ENCODE measurements at regions of chr19 and their contacts with region 1.

Region 1: DNA sequence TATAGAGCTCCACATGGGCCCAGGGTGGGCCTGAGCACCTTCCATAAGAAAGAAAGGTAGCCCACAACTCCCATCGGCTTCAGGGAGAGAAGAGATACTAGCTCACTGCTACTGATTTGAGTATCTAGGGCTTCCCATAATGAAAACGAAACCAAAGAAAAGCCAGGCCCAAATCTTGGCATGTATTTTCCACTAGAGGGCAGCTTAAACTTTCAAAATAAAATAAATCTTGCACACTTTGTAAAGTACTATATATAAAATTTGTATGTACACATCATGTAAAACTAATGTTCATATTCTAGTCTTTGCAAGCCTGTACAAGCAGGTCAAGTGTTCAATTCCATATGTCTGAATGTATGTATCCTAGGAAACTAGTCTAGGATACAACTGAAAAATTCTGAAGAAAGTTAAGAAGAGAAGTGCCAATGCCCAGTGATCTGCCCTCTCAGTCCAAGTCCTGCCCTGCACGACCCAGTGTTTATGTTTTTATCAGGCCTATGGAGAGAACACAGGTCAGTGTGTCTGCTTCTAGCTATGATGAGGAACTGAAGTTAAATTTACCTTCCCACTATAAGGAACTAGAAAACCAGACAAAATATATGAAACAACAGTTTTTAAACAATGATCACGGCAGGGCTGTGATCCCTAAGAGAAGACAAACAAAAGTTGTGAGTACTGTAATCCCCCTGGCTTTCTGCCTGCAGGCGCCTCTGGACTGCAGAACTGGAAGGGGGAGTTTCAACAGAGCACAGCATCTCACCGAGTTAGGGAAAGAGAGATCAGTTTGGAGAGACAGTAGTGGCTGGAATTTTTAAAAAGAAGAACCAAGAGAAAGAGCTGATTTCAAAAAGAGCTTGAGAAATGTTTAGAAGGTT is 475.7 kb downstream of the UQCRFS1 start:
- DNase-seq: peak; percentile 35
- ATAC-seq: peak; percentile 42
- H3K4me3 Mint-ChIP-seq: no peak overlapping the region
- H3K27ac Mint-ChIP-seq: peak overlapping the region; percentile 56
- H3K4me1 Mint-ChIP-seq: peaks cover 5% of the 10 kb centered on the region
- H3K27me3 Mint-ChIP-seq: peaks cover 2% of the 10 kb centered on the region

Region 2: DNA sequence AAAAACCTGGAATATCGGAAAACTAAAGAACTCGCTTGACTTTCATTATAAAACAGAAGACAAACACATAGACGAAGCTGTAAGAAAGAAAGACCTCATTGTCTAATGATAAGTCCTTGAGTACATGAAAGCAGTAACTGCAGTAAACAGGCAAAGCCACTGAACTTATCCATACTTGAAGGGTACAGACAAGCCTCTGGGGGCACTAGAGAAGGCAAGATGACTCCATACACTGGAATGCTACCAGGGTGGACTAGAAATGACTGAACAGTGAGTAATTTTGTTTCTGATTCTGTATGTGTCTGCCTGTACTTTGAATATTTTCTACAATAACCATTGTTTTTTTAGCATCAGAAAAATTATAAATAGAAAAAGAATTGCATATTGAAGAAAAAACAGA is 32.2 kb before region 1 on chr19:
- CTCF ChIA-PET with region 1: no interaction called
- POLR2A ChIA-PET with region 1: no interaction called
- DNase-seq: no peak
- ATAC-seq: no peak
- H3K4me3 Mint-ChIP-seq: no peak overlapping the region
- H3K27ac Mint-ChIP-seq: no peak overlapping the region
- H3K4me1 Mint-ChIP-seq: no peaks in the 10 kb centered on the region
- H3K27me3 Mint-ChIP-seq: peaks cover 5% of the 10 kb centered on the region

Region 3: GRCh38 chr19:28878862-28879566 is 141.8 kb after region 1 on chr19:
- CTCF ChIA-PET with region 1: interaction called, 41 read pairs
- POLR2A ChIA-PET with region 1: no interaction called
- DNase-seq: peak; percentile 74
- ATAC-seq: peak; percentile 58
- H3K4me3 Mint-ChIP-seq: no peak overlapping the region
- H3K27ac Mint-ChIP-seq: no peak overlapping the region
- H3K4me1 Mint-ChIP-seq: no peaks in the 10 kb centered on the region
- H3K27me3 Mint-ChIP-seq: no peaks in the 10 kb centered on the region

Region 4: GRCh38 chr19:29263305-29264135 is 526.3 kb after region 1 on chr19:
- CTCF ChIA-PET with region 1: interaction called, 23 read pairs
- POLR2A ChIA-PET with region 1: no interaction called
- DNase-seq: peak; percentile 68
- ATAC-seq: peak; percentile 61
- H3K4me3 Mint-ChIP-seq: no peak overlapping the region
- H3K27ac Mint-ChIP-seq: no peak overlapping the region
- H3K4me1 Mint-ChIP-seq: no peaks in the 10 kb centered on the region
- H3K27me3 Mint-ChIP-seq: peaks cover 4% of the 10 kb centered on the region

Measured in activated CD8-positive, alpha-beta T cell treated with anti-CD3 and anti-CD28 coated beads, Interleukin-2, amount 10 ng/mL, durations not matched to agents 7 days and 5 days (primary cell).